ENCODE measurements at regions of chr2 and their contacts with region 1.

Region 1: GRCh38 chr2:85420536-85421259 is 2.2 kb downstream of the SH2D6 start:
- DNase-seq: peak; percentile 85
- H3K4me3 Mint-ChIP-seq: peak overlapping the region; percentile 70
- H3K27ac Mint-ChIP-seq: peak overlapping the region; percentile 86
- H3K4me1 Mint-ChIP-seq: peaks cover 25% of the 10 kb centered on the region
- H3K27me3 Mint-ChIP-seq: no peaks in the 10 kb centered on the region

Region 2: GRCh38 chr2:85354286-85355072 is 66.2 kb before region 1 on chr2 and contains the starts of genes ELMOD3 and RETSAT:
- intact Hi-C with region 1: loop called (anchors 1 kb)
- DNase-seq: peak; percentile 97
- H3K4me3 Mint-ChIP-seq: peak within 1 kb of the TSS; percentile 99
- H3K27ac Mint-ChIP-seq: peak within 1 kb of the TSS; percentile 97
- H3K4me1 Mint-ChIP-seq: peaks cover 31% of the 10 kb centered on the region
- H3K27me3 Mint-ChIP-seq: no peaks in the 10 kb centered on the region
- total RNA-seq, gene ELMOD3: 17.0 and 18.9 TPM in 2 replicates
- total RNA-seq, gene RETSAT: 26.3 and 29.6 TPM in 2 replicates

Region 3: DNA sequence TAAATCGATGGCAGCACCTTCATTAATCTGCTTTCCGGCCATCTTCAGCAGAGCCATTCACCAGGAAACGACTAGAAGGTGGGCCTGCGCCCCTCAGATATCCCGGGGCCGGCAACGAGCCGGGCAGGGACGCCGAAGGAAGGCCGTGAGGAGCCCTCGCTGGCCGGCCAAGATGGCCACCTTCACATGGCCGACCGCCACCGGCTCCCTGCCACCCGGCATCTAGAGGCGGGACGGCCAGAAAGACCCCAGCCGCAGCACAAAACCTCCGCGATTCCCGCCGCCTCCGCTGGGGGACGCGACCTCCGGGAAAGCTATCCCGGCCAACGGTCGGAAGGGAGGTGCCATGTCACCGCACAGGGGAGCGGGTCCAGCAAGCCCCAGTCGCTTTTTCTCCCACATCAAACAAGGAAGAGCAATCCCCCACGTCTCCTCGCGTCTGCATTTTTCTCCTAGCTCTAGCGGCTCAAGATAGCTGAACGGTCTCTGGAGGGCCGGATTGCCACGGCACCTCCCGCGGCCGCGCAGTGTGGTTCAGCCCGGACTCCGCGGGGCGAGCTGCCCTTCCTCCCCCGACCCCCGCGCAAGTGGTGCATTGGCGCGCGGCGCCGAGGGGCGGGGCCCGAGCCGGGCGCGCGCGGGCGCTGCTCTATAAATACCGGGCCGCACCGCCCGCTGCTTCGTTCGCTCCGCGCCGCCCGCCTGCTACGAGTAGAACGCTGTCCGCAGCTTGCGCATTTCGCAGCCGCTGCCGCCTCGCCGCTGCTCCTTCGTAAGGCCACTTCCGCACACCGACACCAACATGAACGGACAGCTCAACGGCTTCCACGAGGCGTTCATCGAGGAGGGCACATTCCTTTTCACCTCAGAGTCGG is 118.0 kb after region 1 on chr2 and contains the start of gene MAT2A:
- intact Hi-C with region 1: loop called (anchors 1 kb)
- DNase-seq: peak; percentile 85
- H3K4me3 Mint-ChIP-seq: peak within 1 kb of the TSS; percentile 97
- H3K27ac Mint-ChIP-seq: peak within 1 kb of the TSS; percentile 97
- H3K4me1 Mint-ChIP-seq: peaks cover 43% of the 10 kb centered on the region
- H3K27me3 Mint-ChIP-seq: no peaks in the 10 kb centered on the region
- total RNA-seq, gene MAT2A: 395 and 403 TPM in 2 replicates

Region 4: DNA sequence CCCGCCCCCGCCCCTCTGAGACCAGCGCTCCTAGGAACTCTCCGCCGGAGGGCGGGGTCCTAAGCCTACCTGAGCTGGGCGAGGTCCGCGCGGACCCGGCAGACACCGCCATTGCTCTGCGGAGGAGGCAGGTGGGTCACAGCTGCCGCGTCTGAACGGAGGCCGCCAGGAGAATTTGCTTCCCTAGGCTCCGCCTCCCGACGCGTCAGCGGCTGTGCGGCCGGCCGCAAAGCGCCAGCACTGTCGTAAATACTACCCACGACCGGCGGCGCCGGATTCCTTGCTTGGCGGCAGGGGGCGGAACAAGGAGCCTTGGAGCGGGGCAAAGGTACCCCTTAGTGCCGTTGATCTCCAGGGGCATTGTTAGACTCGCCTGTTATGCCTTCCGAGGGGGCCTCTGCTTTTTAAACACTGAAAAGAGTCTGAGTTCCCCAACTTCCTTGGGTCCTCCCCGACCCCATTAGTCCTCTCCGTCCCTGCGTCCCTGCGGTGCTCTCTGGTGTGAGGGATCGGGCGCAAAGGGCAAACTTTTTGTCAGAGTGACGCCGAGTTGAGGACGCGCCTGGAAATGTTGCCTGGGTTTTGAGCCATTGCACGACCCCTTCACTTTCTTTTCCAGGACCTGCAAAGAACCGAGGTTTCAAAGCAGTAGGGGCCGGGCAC is 140.8 kb after region 1 on chr2 and contains the start of gene GGCX:
- intact Hi-C with region 1: loop called (anchors 2 kb)
- DNase-seq: peak; percentile 87
- H3K4me3 Mint-ChIP-seq: peak within 1 kb of the TSS; percentile 98
- H3K27ac Mint-ChIP-seq: peak within 1 kb of the TSS; percentile 93
- H3K4me1 Mint-ChIP-seq: peaks cover 25% of the 10 kb centered on the region
- H3K27me3 Mint-ChIP-seq: no peaks in the 10 kb centered on the region
- total RNA-seq, gene GGCX: 25.1 and 27.0 TPM in 2 replicates

Region 5: DNA sequence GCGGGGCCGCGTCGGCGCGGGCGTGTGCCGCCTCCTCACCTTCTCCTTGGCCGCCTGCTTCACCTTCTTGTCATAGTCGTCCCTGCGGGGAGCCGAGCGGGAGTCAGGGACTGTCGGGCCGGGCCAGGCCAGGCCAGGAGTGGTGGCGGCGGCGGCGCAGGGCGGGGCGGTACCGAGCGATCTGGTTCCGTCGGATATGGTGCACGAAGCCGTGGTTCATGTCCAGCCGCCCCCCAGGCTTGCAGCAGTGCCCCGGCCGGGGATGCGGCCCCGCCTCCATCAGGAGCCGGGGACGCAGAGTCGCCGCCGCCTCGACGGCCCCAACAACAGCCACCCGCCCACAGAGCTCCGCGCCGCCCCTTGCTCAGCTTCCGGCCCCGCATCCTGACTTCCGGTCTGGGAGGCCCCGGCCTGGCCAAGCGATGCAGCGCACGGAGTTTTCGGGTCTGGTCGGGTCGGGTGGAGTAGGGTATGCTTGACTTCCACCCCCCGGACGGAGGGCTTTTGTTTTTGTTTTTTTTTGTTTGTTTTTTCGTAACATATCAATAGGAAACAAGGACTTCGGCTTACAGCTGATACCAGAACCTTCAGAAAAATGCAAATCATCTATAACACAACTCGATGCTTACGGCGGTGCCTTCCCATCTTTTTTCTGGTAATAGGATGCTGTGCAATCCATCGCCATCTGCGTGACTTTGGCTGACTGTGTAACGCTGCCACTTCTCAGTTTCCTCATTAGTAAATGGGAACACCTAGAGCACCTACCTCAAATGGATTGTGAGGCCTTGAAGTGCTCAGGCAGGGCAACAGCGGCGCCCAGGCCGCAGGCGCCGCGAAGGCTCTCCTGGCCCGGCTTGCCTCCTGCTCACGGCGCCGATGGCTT is 191.2 kb after region 1 on chr2 and contains the start of gene C2orf68:
- intact Hi-C with region 1: loop called (anchors 5 kb)
- DNase-seq: peak; percentile 85
- H3K4me3 Mint-ChIP-seq: peak within 1 kb of the TSS; percentile 100
- H3K27ac Mint-ChIP-seq: peak within 1 kb of the TSS; percentile 97
- H3K4me1 Mint-ChIP-seq: peaks cover 5% of the 10 kb centered on the region
- H3K27me3 Mint-ChIP-seq: no peaks in the 10 kb centered on the region
- total RNA-seq, gene C2orf68: 34.7 and 35.6 TPM in 2 replicates

Measured in activated T-helper 2 cell treated with anti-CD3 and anti-CD28 coated beads, Interferon-gamma antibody, Interleukin-2, Interleukin-4, amounts not matched to agents 10 μg/mL and 5 μg/mL and 100 μg/mL, durations not matched to agents 14 hours and 24 hours and 36 hours (primary cell).